OCI-LY7 (cell line): ENCODE measurements at regions of chr15 and their contacts with region 1.

Region 1: DNA sequence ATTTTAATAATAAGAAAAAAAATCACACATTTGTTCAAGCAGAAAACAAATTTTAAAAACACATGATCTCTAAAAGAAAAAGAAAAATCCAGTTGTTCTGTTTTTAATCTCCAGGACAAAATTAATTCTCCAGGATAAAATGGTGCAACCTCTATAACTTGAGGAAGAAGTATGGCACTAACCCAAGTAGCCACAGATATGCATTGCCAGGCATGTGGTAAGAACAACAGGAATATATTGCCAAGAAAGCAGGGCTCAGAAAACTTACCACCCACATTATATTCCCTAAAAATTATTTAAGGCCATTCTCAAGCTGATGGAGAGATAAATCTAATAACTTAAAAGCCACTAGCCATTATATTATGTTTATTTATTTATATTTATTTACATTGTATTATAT is 295.7 kb upstream of the TMCO5A start:
- DNase-seq: no peak
- H3K4me3 ChIP-seq: no peak overlapping the region
- H3K27ac ChIP-seq: no peak overlapping the region
- H3K4me1 ChIP-seq: no peaks in the 10 kb centered on the region
- CTCF ChIP-seq: no peak

Region 2: GRCh38 chr15:37652646-37653417 is 14.1 kb after region 1 on chr15:
- CTCF ChIA-PET with region 1: no interaction called
- POLR2A ChIA-PET with region 1: interaction called, 11 read pairs
- intact Hi-C with region 1: no loop called
- DNase-seq: no peak
- H3K4me3 ChIP-seq: no peak overlapping the region
- H3K27ac ChIP-seq: no peak overlapping the region
- H3K4me1 ChIP-seq: no peaks in the 10 kb centered on the region
- CTCF ChIP-seq: no peak

Region 3: DNA sequence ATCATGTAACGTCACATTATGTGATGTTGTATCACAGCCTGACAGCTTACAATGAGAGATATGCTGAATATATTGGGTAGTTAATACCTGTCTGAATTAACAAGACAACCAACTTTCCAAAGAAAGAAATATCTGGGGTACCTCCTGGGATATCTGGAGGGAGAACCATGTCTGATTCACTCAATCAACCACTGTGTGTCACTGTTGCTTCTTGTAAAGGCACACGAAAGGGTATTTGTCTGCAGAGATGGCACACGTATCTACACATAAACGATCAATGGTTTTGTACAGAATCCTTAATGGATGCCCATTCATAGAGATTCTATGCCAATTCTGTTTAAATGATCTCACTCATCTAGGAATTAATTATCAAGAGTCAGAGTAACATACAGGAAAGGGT is 43.6 kb after region 1 on chr15:
- CTCF ChIA-PET with region 1: no interaction called
- POLR2A ChIA-PET with region 1: no interaction called
- intact Hi-C with region 1: no loop called
- DNase-seq: peak; percentile 8
- H3K4me3 ChIP-seq: no peak overlapping the region
- H3K27ac ChIP-seq: no peak overlapping the region
- H3K4me1 ChIP-seq: no peaks in the 10 kb centered on the region
- CTCF ChIP-seq: peak; percentile 57

Region 4: GRCh38 chr15:38005953-38006808 is 367.5 kb after region 1 on chr15:
- CTCF ChIA-PET with region 1: no interaction called
- POLR2A ChIA-PET with region 1: no interaction called
- intact Hi-C with region 1: no loop called
- DNase-seq: no peak
- H3K4me3 ChIP-seq: no peak overlapping the region
- H3K27ac ChIP-seq: no peak overlapping the region
- H3K4me1 ChIP-seq: no peaks in the 10 kb centered on the region
- CTCF ChIP-seq: no peak